Activated B cell treated with CpG ODN at 0.5 μM for 24 hours (primary cell): ENCODE measurements at regions of chrX and their contacts with region 1.

Region 1: DNA sequence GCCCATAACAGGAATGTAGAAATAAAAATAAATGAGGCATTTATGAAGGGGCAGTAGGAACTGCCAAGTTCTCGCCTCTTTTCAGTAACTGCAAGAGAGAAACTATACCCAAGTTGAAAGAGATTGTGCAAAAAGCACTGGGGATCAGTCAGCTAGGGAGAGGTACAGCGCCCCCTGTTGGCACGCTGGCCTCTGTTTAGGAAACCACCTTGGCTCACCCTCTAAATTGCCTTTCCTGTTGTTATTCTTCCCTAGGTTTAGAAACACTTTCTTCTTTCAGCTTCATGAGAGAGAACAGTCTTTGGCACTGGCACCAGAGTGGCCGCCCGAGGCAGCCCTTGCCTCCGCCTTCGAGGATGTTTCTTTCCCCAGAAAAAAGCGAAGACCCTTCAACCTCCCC is 348.5 kb downstream of the MID1IP1 start:
- DNase-seq: peak; percentile 42
- ATAC-seq: no peak
- H3K4me3 Mint-ChIP-seq: no peak overlapping the region
- H3K27ac Mint-ChIP-seq: peak overlapping the region; percentile 30
- H3K4me1 Mint-ChIP-seq: peaks cover 51% of the 10 kb centered on the region
- H3K27me3 Mint-ChIP-seq: no peaks in the 10 kb centered on the region
- CTCF ChIP-seq: no peak

Region 2: GRCh38 chrX:38768079-38768478 is 381.7 kb before region 1 on chrX:
- CTCF ChIA-PET with region 1: interaction called, 10 read pairs
- POLR2A ChIA-PET with region 1: no interaction called
- intact Hi-C with region 1: loop called (anchors 1 kb)
- DNase-seq: no peak
- ATAC-seq: no peak
- H3K4me3 Mint-ChIP-seq: no peak overlapping the region
- H3K27ac Mint-ChIP-seq: no peak overlapping the region
- H3K4me1 Mint-ChIP-seq: no peaks in the 10 kb centered on the region
- H3K27me3 Mint-ChIP-seq: no peaks in the 10 kb centered on the region
- CTCF ChIP-seq: no peak

Region 3: DNA sequence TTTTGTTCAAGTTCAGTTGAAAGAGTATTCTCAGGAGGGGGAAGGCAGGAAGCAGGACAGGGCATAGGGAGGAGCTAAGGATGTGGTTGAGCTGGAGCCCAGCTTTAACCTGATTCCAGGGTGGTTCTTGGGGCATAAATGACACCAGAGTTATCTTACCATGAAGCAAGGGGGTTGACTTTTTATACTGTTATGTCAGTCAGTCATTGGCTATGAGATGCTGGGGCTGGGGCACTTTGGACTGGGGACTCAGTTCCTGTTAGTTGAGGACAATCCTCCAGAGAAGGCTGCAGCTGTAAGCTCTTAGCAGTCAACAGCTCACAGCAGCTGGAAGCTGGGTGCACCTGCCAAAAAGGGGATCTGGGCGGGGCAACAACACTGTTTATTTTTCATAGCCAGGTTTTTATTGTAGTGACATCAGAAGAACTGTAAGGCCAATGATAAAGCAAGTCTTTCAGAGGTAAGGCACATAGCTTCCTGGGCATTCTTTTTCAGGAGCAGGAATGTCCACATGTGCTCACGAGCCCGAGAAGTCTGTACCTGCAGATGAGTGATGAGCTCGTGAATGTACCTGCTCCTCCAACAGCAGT is 270.0 kb before region 1 on chrX:
- CTCF ChIA-PET with region 1: no interaction called
- POLR2A ChIA-PET with region 1: interaction called, 11 read pairs
- intact Hi-C with region 1: loop called (anchors 1 kb)
- DNase-seq: peak; percentile 23
- ATAC-seq: peak; percentile 91
- H3K4me3 Mint-ChIP-seq: peak overlapping the region; percentile 58
- H3K27ac Mint-ChIP-seq: peak overlapping the region; percentile 84
- H3K4me1 Mint-ChIP-seq: peaks cover 44% of the 10 kb centered on the region
- H3K27me3 Mint-ChIP-seq: no peaks in the 10 kb centered on the region
- CTCF ChIP-seq: no peak

Region 4: DNA sequence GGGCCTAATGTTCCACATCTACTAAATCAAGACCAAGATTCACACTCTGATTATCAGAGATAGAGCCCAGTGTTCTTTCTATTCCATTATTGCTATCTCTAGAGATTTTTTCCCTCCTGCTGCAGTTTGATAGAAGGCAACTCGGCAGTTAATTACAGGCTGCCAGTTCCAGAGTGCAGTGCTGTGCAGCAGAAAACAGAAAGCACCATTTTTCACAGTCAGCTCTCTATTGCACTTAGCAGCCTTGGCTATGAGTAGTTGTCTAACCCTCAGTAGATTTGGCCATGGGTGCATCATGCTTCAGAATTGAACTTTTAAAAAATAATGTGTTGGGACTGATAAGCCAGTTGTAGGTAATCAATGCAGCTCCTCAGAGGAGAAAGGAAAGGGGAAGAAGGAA is 53.2 kb before region 1 on chrX:
- CTCF ChIA-PET with region 1: interaction called, 3 read pairs
- POLR2A ChIA-PET with region 1: no interaction called
- intact Hi-C with region 1: loop called (anchors 1 kb)
- DNase-seq: no peak
- ATAC-seq: no peak
- H3K4me3 Mint-ChIP-seq: no peak overlapping the region
- H3K27ac Mint-ChIP-seq: no peak overlapping the region
- H3K4me1 Mint-ChIP-seq: no peaks in the 10 kb centered on the region
- H3K27me3 Mint-ChIP-seq: no peaks in the 10 kb centered on the region
- CTCF ChIP-seq: no peak

Region 5: DNA sequence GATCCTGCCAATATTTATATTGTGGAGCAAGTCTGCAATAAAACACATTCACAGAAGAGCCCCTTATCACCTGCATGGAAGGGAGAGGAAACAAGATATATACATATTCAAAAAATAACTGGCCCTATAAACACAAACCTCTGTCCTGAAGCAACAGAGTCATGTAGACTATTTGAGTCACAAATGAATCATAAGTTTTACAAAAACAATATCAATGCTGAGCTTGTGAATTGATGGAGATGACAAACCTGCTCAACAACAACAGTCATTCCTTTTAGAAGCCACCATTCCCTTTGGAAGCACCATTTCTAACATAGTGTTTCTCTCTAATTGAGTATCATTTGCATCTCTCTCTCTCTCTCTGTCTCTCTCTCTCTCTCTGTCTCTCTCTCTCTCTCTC is 34.6 kb before region 1 on chrX:
- CTCF ChIA-PET with region 1: no interaction called
- POLR2A ChIA-PET with region 1: no interaction called
- intact Hi-C with region 1: no loop called
- DNase-seq: no peak
- ATAC-seq: no peak
- H3K4me3 Mint-ChIP-seq: no peak overlapping the region
- H3K27ac Mint-ChIP-seq: no peak overlapping the region
- H3K4me1 Mint-ChIP-seq: no peaks in the 10 kb centered on the region
- H3K27me3 Mint-ChIP-seq: no peaks in the 10 kb centered on the region
- CTCF ChIP-seq: no peak

Region 6: GRCh38 chrX:39196192-39197102 is 46.7 kb after region 1 on chrX:
- CTCF ChIA-PET with region 1: no interaction called
- POLR2A ChIA-PET with region 1: interaction called, 3 read pairs
- intact Hi-C with region 1: loop called (anchors 1 kb)
- DNase-seq: peak; percentile 16
- ATAC-seq: peak; percentile 95
- H3K4me3 Mint-ChIP-seq: peak overlapping the region; percentile 65
- H3K27ac Mint-ChIP-seq: peak overlapping the region; percentile 56
- H3K4me1 Mint-ChIP-seq: peaks cover 19% of the 10 kb centered on the region
- H3K27me3 Mint-ChIP-seq: peaks cover 7% of the 10 kb centered on the region
- CTCF ChIP-seq: no peak

Region 7: DNA sequence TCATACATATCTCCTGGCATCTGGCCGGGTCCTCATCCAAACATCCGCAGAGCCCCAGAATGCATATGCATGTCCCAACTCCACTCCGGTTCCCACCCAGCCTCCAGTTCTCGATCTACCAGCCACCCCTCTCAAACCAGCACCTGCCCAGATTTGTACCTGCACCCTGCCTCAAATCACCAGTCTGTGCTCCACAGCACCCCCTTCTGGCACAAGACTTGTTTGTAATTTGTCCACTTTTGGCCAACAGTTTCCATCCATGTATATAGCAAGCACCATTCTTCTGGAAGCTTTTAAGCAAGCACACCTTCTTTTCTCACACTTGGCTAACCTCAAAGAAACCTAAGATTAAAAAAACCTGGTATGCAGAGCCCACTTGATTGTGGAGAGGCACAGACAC is 295.6 kb after region 1 on chrX:
- CTCF ChIA-PET with region 1: no interaction called
- POLR2A ChIA-PET with region 1: no interaction called
- intact Hi-C with region 1: loop called (anchors 10 kb)
- DNase-seq: no peak
- ATAC-seq: no peak
- H3K4me3 Mint-ChIP-seq: no peak overlapping the region
- H3K27ac Mint-ChIP-seq: no peak overlapping the region
- H3K4me1 Mint-ChIP-seq: peaks cover 31% of the 10 kb centered on the region
- H3K27me3 Mint-ChIP-seq: no peaks in the 10 kb centered on the region
- CTCF ChIP-seq: no peak

Region 8: DNA sequence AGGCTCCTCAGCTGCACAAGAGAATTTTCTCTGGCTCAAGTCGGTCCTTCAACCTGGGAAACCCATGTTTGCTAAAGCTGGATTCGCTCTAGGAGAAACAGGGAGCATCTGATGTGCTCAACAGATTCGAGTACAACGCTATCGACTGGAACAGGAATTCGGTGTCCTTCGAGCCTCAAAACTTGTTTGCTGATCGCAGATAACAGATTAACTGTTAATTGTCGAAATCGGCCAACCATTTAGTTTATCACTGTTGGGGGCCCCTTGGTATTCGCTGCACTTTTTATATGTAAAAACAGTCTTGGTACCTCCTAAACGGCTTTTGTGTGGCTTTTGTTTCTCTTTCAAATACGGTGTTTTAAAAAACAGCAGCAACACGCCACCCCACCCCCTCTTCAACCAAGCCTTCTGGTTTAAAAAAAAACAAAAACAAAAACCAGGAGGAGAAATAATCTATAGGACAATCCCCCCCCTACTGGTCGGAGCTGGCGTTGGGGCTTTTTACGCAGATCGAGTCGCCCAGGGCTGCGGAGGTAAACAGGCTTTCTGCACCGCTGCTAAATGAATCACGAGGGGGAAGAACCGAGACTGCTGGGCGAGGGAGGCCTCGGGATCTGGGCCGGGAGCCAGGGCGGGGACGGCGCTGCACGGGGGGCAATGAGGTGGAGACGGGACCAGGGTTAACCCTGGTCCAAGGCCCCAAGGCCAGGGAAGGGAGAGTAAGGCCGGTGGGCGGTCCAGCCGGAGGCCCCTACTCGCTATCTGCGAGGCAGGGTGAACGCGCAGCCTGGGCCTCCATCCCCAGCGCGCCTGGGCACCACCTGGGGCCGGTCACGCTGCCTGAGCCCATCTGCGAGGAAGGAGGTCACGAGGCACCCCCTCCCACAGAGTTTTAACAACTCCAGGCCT is 1019.7 kb after region 1 on chrX:
- CTCF ChIA-PET with region 1: no interaction called
- POLR2A ChIA-PET with region 1: no interaction called
- intact Hi-C with region 1: loop called (anchors 2 kb)
- DNase-seq: peak; percentile 63
- ATAC-seq: peak; percentile 59
- H3K4me3 Mint-ChIP-seq: peak overlapping the region; percentile 88
- H3K27ac Mint-ChIP-seq: peak overlapping the region; percentile 98
- H3K4me1 Mint-ChIP-seq: peaks cover 69% of the 10 kb centered on the region
- H3K27me3 Mint-ChIP-seq: no peaks in the 10 kb centered on the region
- CTCF ChIP-seq: no peak